GM12878 (cell line): ENCODE measurements at regions of chr6 and their contacts with region 1.

Region 1: GRCh38 chr6:70547313-70547712 is 19.4 kb upstream of the SDHAF4 start:
- DNase-seq: no peak
- ATAC-seq: peak; percentile 50; the same call in 1 of the 3 replicates
- H3K4me3 ChIP-seq: no peak overlapping the region
- H3K27ac ChIP-seq: no peak overlapping the region
- H3K4me1 ChIP-seq: no peaks in the 10 kb centered on the region
- H3K27me3 ChIP-seq: no peaks in the 10 kb centered on the region
- CTCF ChIP-seq: peak; percentile 33 to 49 (median 43); a peak in 5 of 6 replicates
- EP300 ChIP-seq: no peak
- POLR2A ChIP-seq: no peak
- RAD21 ChIP-seq: peak; percentile 62

Region 2: GRCh38 chr6:70507161-70507560 is 40.2 kb before region 1 on chr6:
- CTCF ChIA-PET with region 1: no interaction called
- POLR2A ChIA-PET with region 1: no interaction called
- RAD21 ChIA-PET with region 1: no interaction called
- SMC1A ChIA-PET with region 1: no interaction called
- in situ Hi-C with region 1: no loop called
- intact Hi-C with region 1: no loop called
- DNase-seq: no peak
- ATAC-seq: no peak
- H3K4me3 ChIP-seq: no peak overlapping the region
- H3K27ac ChIP-seq: no peak overlapping the region
- H3K4me1 ChIP-seq: no peaks in the 10 kb centered on the region
- H3K27me3 ChIP-seq: no peaks in the 10 kb centered on the region
- CTCF ChIP-seq: no peak
- EP300 ChIP-seq: no peak
- POLR2A ChIP-seq: no peak
- RAD21 ChIP-seq: no peak

Region 3: GRCh38 chr6:70531133-70531532 is 16.2 kb before region 1 on chr6:
- CTCF ChIA-PET with region 1: interaction called, 4 read pairs
- POLR2A ChIA-PET with region 1: no interaction called
- RAD21 ChIA-PET with region 1: no interaction called
- SMC1A ChIA-PET with region 1: interaction called, 10 read pairs
- in situ Hi-C with region 1: no loop called
- intact Hi-C with region 1: no loop called
- DNase-seq: peak; percentile 4
- ATAC-seq: peak; percentile 83
- H3K4me3 ChIP-seq: no peak overlapping the region
- H3K27ac ChIP-seq: no peak overlapping the region
- H3K4me1 ChIP-seq: no peaks in the 10 kb centered on the region
- H3K27me3 ChIP-seq: no peaks in the 10 kb centered on the region
- CTCF ChIP-seq: no peak
- EP300 ChIP-seq: peak in 1 of 2 experiments; percentile 48; a peak in 1 of 4 replicates
- POLR2A ChIP-seq: no peak
- RAD21 ChIP-seq: no peak

Region 4: DNA sequence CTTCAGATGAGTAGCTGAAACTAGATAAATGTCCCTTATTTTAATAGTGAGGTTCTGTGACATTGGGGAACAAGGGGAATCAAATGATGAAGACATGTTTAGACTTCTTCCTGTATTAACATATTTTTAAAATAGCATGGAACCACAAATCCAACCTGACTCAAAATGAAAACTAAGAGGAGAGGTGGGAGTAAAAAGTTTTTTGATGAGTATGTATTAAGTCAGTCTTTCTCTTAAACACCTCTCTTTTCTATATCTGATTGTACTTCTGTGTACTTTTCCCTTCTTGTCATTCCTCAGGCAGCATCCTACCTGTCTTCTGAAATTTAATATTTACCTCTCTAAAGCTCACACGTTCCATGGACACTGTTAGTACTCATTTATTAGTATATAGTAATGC is 10.7 kb after region 1 on chr6:
- CTCF ChIA-PET with region 1: interaction called, 5 read pairs
- POLR2A ChIA-PET with region 1: no interaction called
- RAD21 ChIA-PET with region 1: interaction called, 4 read pairs
- SMC1A ChIA-PET with region 1: interaction called, 21 read pairs
- in situ Hi-C with region 1: no loop called
- intact Hi-C with region 1: no loop called
- DNase-seq: no peak
- ATAC-seq: no peak
- H3K4me3 ChIP-seq: no peak overlapping the region
- H3K27ac ChIP-seq: no peak overlapping the region
- H3K4me1 ChIP-seq: no peaks in the 10 kb centered on the region
- H3K27me3 ChIP-seq: no peaks in the 10 kb centered on the region
- CTCF ChIP-seq: no peak
- EP300 ChIP-seq: no peak
- POLR2A ChIP-seq: no peak
- RAD21 ChIP-seq: no peak